Breast epithelium (tissue), 4 donors: ENCODE measurements at regions of chr1 and their contacts with region 1.

Region 1: GRCh38 chr1:174556392-174556791 is 108.6 kb downstream of the GPR52 start:
- DNase-seq: no peak
- H3K4me3 ChIP-seq: no peak overlapping the region
- H3K27ac ChIP-seq: no peak overlapping the region
- H3K4me1 ChIP-seq: no peaks in the 10 kb centered on the region
- H3K27me3 ChIP-seq: no peaks in the 10 kb centered on the region
- CTCF ChIP-seq: no peak
- POLR2A ChIP-seq: no peak

Region 2: DNA sequence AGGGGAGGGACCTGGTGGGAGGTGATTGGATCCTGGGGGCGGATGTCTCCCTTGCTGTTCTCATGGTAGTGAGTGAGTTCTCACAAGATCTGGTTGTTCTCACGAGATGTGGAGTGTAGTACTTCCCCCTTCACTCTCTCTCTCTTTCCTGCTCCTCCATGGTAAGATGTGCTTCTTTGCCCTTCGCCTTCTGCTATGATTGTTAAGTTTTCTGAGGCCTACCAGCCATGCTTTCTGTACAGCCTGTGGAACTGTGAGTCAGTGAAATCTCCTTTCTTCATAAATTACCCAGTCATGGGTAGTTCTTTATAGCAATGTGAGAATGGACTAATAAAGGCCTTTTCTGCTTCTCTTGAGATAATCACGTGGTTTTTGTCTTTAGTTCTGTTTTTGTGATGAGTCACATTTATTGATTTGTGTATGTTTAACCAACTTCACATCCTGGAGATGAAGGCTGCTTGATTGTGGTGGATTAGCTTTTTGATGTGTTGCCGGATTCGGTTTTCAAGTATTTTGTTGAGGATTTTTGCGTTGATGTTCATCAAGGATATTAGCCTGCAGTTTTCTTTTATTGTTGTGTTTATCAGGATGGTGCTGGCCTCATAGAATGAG is 351.6 kb before region 1 on chr1:
- intact Hi-C with region 1: loop called (anchors 5 kb)
- DNase-seq: no peak
- H3K4me3 ChIP-seq: no peak overlapping the region
- H3K27ac ChIP-seq: no peak overlapping the region
- H3K4me1 ChIP-seq: no peaks in the 10 kb centered on the region
- H3K27me3 ChIP-seq: no peaks in the 10 kb centered on the region
- CTCF ChIP-seq: no peak
- POLR2A ChIP-seq: no peak

Region 3: GRCh38 chr1:175023043-175023921 is 466.9 kb after region 1 on chr1 and contains the start of gene MRPS14:
- intact Hi-C with region 1: no loop called
- DNase-seq: peak; percentile 97 to 98
- H3K4me3 ChIP-seq: peak within 1 kb of the TSS; percentile 75 to 86 (median 83)
- H3K27ac ChIP-seq: peak within 1 kb of the TSS; percentile 88 to 90
- H3K4me1 ChIP-seq: no peaks in the 10 kb centered on the region
- H3K27me3 ChIP-seq: no peaks in the 10 kb centered on the region
- CTCF ChIP-seq: no peak
- POLR2A ChIP-seq: peak; percentile 83
- total RNA-seq, gene MRPS14: 22.9 to 38.5 (median 28.5) TPM